ENCODE measurements at regions of chr4 and their contacts with region 1.

Region 1: GRCh38 chr4:140359562-140360427 is 13.7 kb upstream of the SCOC start:
- DNase-seq: peak; percentile 90
- H3K4me3 ChIP-seq: no peak overlapping the region
- H3K27ac ChIP-seq: no peak overlapping the region
- H3K4me1 ChIP-seq: no peaks in the 10 kb centered on the region
- H3K27me3 ChIP-seq: no peaks in the 10 kb centered on the region
- CTCF ChIP-seq: peak; percentile 93

Region 2: DNA sequence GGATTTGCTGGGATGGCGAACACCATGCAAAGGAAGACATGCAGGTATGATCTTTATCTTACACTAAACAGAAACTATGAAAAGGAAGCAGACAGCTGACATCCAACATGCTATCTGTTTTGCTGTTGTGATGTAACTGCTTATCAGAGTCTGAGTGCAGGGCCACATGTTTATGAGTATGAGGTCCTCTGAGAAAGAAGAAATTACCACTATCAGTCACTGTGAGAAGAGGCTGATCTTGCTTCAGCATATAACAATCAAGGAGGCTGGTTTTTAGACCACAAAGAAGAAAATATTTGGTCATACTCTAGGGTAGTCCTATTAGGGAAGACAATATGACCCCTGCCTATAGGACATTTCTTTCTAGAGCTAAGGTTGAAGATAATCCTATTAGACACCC is 49.2 kb after region 1 on chr4:
- intact Hi-C with region 1: no loop called
- DNase-seq: no peak
- H3K4me3 ChIP-seq: no peak overlapping the region
- H3K27ac ChIP-seq: no peak overlapping the region
- H3K4me1 ChIP-seq: no peaks in the 10 kb centered on the region
- H3K27me3 ChIP-seq: no peaks in the 10 kb centered on the region
- CTCF ChIP-seq: no peak

Region 3: DNA sequence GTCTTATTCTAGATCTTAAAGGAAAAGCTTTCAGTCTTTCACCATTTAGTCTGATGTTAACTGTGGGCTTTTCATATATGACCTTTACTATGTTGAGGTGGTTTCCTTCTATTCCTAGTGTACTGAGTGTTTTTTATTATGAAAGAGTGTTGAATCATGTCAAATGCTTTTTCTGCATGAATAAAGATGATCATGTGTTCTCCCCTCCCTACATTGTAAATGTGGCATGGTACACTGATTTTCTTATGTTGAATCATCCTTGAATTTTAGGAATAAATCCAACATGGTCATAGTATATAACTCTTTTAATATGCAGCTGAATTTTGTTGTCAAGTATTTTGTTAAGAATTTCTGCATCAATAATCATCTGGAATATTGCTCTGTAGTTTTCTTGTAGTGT is 63.3 kb after region 1 on chr4:
- intact Hi-C with region 1: no loop called
- DNase-seq: no peak
- H3K4me3 ChIP-seq: no peak overlapping the region
- H3K27ac ChIP-seq: no peak overlapping the region
- H3K4me1 ChIP-seq: no peaks in the 10 kb centered on the region
- H3K27me3 ChIP-seq: no peaks in the 10 kb centered on the region
- CTCF ChIP-seq: no peak

Region 4: DNA sequence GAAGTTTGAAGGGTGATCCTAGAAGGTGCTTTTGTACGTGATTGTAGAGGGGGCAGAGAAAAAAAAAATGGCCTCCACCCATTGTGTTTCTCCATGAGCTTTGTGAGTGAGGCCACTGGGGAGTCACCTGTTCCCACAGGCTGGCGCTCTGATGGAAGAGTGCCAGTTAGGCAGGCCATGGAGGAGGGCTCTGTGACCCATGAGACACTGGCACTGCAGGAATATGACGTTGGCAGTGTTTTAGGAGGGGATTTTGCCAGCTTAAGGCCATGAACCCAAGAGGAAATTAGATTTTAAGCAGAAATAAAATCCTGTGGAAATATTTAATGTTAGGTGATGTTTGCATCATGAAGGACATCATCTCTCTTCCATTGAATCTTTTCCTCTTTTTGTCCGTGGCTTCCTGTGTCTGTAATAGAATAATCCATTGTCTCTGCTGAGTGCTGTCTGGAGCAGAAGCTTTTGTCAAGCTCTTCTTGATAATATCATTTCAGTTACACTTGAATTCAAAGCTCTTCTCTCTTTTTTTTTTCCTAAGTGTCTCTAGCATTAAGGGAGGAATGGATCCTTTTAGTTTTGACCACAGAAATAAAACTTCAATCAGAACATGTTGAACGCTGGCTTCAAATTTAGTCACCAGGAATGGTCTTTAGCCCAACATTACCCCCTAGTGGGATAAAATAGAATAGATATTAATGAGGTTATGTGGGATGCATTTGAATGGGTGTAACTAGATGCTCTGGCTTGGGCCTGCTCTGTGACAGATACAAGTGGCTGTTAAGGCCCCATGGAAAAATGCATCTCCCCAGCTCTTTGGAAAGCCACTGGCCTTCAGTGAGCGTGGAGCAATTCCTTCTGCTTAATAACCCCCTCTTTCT is 250.0 kb after region 1 on chr4:
- intact Hi-C with region 1: loop called (anchors 10 kb)
- DNase-seq: no peak
- H3K4me3 ChIP-seq: no peak overlapping the region
- H3K27ac ChIP-seq: no peak overlapping the region
- H3K4me1 ChIP-seq: no peaks in the 10 kb centered on the region
- H3K27me3 ChIP-seq: no peaks in the 10 kb centered on the region
- CTCF ChIP-seq: no peak